CD4-positive, alpha-beta memory T cell (primary cell): ENCODE measurements at regions of chr10 and their contacts with region 1.

Region 1: GRCh38 chr10:124916585-124917427 is 25.1 kb upstream of the ZRANB1 start:
- DNase-seq: peak; percentile 94 to 97 (median 95)
- H3K4me3 ChIP-seq: peak overlapping the region; percentile 61 to 87
- H3K4me3 Mint-ChIP-seq: peak overlapping the region; percentile 86 to 96 (median 92)
- H3K27ac ChIP-seq: peak overlapping the region; percentile 83
- H3K27ac Mint-ChIP-seq: peak overlapping the region; percentile 90 to 98 (median 98)
- H3K4me1 ChIP-seq: peaks cover 33% of the 10 kb centered on the region
- H3K4me1 Mint-ChIP-seq: peaks cover 24 to 42% (median 35%) of the 10 kb centered on the region in 4 donors
- H3K27me3 ChIP-seq: no peaks in the 10 kb centered on the region
- H3K27me3 Mint-ChIP-seq: no peaks in the 10 kb centered on the region

Region 2: GRCh38 chr10:124418726-124419501 is 497.9 kb before region 1 on chr10 and contains the start of gene OAT:
- CTCF ChIA-PET with region 1: no interaction called
- POLR2A ChIA-PET with region 1: no interaction called
- intact Hi-C with region 1: loop called (anchors 10 kb)
- DNase-seq: peak; percentile 94 to 95 (median 95)
- H3K4me3 ChIP-seq: peak within 1 kb of the TSS; percentile 52 to 66
- H3K4me3 Mint-ChIP-seq: peak within 1 kb of the TSS; percentile 84 to 95 (median 87)
- H3K27ac ChIP-seq: peak within 1 kb of the TSS; percentile 70
- H3K27ac Mint-ChIP-seq: peak within 1 kb of the TSS; percentile 74 to 91 (median 84)
- H3K4me1 ChIP-seq: peaks cover 13% of the 10 kb centered on the region
- H3K4me1 Mint-ChIP-seq: peaks cover 4 to 36% (median 20%) of the 10 kb centered on the region in 4 donors
- H3K27me3 ChIP-seq: no peaks in the 10 kb centered on the region
- H3K27me3 Mint-ChIP-seq: peaks cover 4 to 8% of the 10 kb centered on the region in 2 donors
- total RNA-seq, gene OAT: 34.8 to 39.3 TPM

Region 3: DNA sequence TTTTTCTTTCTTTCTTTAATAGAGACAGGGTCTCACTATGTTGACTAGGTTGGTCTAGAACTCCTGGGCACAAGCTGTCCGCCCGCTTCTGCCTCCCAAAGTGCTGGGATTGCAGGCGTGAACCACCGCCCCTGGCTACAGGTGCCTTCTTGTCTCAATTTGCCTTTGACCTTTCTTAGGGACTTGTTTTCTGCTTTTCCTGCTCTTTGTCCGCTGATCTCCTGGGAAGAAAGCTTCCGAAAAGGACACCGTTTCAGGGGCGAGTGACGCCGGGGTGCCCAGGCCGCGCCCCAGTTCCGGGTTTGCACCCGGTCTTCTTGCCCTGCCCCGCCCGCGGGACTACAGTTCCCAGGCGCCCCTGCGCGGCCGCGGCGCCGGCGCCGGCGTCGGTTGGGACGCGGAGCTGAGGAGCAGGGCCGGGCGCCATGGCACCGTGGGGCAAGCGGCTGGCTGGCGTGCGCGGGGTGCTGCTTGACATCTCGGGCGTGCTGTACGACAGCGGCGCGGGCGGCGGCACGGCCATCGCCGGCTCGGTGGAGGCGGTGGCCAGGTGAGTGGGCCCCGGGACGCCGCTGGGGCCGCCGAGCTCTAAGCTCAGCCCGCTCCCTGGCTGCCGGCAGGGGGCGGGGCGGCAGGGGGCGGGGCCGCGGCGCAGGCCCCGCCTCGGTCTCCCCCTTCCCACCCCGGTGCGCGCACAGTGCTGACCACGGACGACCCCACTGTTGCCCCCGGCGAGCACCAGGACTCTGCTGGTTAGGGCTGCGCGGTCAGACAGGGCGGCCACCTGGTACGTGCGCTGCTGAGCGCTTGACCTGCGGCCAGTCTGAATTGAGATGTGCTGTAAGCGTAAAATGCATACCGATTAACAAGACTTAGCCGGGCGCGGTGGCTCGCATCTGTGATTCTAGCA is 455.1 kb before region 1 on chr10 and contains the start of gene LHPP:
- CTCF ChIA-PET with region 1: no interaction called
- POLR2A ChIA-PET with region 1: interaction called, 14 read pairs
- intact Hi-C with region 1: loop called (anchors 2 kb)
- DNase-seq: peak; percentile 85 to 90 (median 86)
- H3K4me3 ChIP-seq: peak within 1 kb of the TSS; percentile 42 to 76
- H3K4me3 Mint-ChIP-seq: peak within 1 kb of the TSS; percentile 88 to 96 (median 92)
- H3K27ac ChIP-seq: peak within 1 kb of the TSS; percentile 59
- H3K27ac Mint-ChIP-seq: peak within 1 kb of the TSS; percentile 80 to 98 (median 97)
- H3K4me1 ChIP-seq: peaks cover 27% of the 10 kb centered on the region
- H3K4me1 Mint-ChIP-seq: peaks cover 21 to 36% (median 29%) of the 10 kb centered on the region in 4 donors
- H3K27me3 ChIP-seq: no peaks in the 10 kb centered on the region
- H3K27me3 Mint-ChIP-seq: peaks cover 4 to 5% of the 10 kb centered on the region in 2 donors
- total RNA-seq, gene LHPP: 17.9 to 18.3 TPM

Region 4: DNA sequence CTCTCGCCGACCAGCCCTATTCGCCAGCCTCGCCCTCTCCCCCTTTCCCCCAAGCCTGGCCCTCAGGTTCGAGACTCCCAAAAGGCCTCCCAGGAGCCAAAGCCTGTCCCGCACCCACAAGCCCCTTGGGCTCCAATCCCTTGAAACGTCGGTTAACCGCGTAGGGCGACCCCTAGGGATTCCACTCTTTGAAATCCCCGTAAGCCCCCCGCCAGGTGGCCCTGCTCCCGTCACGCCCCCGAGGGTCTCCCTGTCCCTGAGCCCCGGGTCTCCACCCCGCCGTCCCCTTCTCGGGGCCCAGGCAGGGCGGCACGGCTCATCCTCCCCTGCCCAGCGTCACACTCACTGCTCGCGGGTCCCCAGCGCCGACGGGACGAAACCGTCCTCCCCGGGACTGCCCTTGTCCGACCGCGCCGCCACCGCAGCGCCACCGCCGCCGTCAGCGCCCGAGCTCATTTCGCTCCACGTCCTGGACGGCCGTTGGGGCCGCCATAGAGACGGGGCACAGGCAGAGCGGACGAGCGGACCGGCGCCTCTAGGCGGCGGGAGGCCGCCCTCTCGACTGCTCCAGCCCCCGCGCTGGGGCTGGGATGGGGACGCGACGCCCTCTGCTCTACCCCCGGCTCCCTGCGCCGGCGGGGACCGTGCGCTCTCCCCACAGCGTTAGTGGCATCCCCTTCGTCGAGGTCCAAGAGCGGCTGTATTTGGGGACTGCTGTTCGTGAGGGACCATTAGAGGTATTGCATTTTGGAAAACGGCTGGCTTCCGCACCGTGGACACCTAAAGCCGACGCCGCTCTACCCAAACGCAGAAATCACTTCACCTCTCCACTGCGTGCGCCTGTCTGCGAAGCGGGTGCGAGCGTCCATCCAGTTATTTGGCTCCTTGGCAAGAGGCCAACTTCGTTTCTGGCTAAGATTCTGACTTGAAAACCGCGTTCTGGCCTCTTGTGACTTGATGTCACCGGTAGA is 125.1 kb before region 1 on chr10 and contains the start of gene EEF1AKMT2:
- CTCF ChIA-PET with region 1: no interaction called
- POLR2A ChIA-PET with region 1: interaction called, 8 read pairs
- intact Hi-C with region 1: loop called (anchors 2 kb)
- DNase-seq: peak; percentile 78 to 87 (median 85)
- H3K4me3 ChIP-seq: peak within 1 kb of the TSS; percentile 97 to 99
- H3K4me3 Mint-ChIP-seq: peak within 1 kb of the TSS; percentile 92 to 99 (median 98)
- H3K27ac ChIP-seq: peak within 1 kb of the TSS; percentile 76
- H3K27ac Mint-ChIP-seq: peak within 1 kb of the TSS; percentile 78 to 97 (median 93)
- H3K4me1 ChIP-seq: peaks cover 16% of the 10 kb centered on the region
- H3K4me1 Mint-ChIP-seq: peaks cover 5 to 28% (median 17%) of the 10 kb centered on the region in 4 donors
- H3K27me3 ChIP-seq: no peaks in the 10 kb centered on the region
- H3K27me3 Mint-ChIP-seq: no peaks in the 10 kb centered on the region
- total RNA-seq, gene EEF1AKMT2: 20.0 to 24.2 TPM

Region 5: GRCh38 chr10:124802313-124802675 is 114.5 kb before region 1 on chr10:
- CTCF ChIA-PET with region 1: interaction called, 4 read pairs
- POLR2A ChIA-PET with region 1: interaction called, 11 read pairs
- intact Hi-C with region 1: loop called (anchors 1 kb)
- DNase-seq: peak in 2 of 5 donors; percentile 7 to 46
- H3K4me3 ChIP-seq: peak overlapping the region; percentile 76 to 78
- H3K4me3 Mint-ChIP-seq: peak overlapping the region; percentile 87 to 98 (median 90)
- H3K27ac ChIP-seq: peak overlapping the region; percentile 83
- H3K27ac Mint-ChIP-seq: peak overlapping the region; percentile 76 to 94 (median 90)
- H3K4me1 ChIP-seq: peaks cover 14% of the 10 kb centered on the region
- H3K4me1 Mint-ChIP-seq: peaks cover 12 to 20% (median 17%) of the 10 kb centered on the region in 4 donors
- H3K27me3 ChIP-seq: no peaks in the 10 kb centered on the region
- H3K27me3 Mint-ChIP-seq: peaks cover 3% of the 10 kb centered on the region in 2 donors

Region 6: GRCh38 chr10:124966008-124966407 is 49.2 kb after region 1 on chr10:
- CTCF ChIA-PET with region 1: no interaction called
- POLR2A ChIA-PET with region 1: no interaction called
- intact Hi-C with region 1: loop called (anchors 5 kb)
- DNase-seq: no peak
- H3K4me3 ChIP-seq: no peak overlapping the region
- H3K4me3 Mint-ChIP-seq: no peak overlapping the region
- H3K27ac ChIP-seq: no peak overlapping the region
- H3K27ac Mint-ChIP-seq: peak overlapping the region in 1 of 7 donors; percentile 8
- H3K4me1 ChIP-seq: no peaks in the 10 kb centered on the region
- H3K4me1 Mint-ChIP-seq: peaks cover 23 to 42% (median 39%) of the 10 kb centered on the region in 4 donors
- H3K27me3 ChIP-seq: no peaks in the 10 kb centered on the region
- H3K27me3 Mint-ChIP-seq: no peaks in the 10 kb centered on the region